ENCODE measurements at regions of chr1 and their contacts with region 1.

Region 1: GRCh38 chr1:171485375-171486047 is at the start of gene PRRC2C:
- DNase-seq: peak; percentile 93 to 96 (median 95)
- H3K4me3 ChIP-seq: peak within 1 kb of the TSS; percentile 45 to 99
- H3K4me3 Mint-ChIP-seq: peak within 1 kb of the TSS; percentile 90 to 99 (median 93)
- H3K27ac ChIP-seq: peak within 1 kb of the TSS; percentile 100
- H3K27ac Mint-ChIP-seq: peak within 1 kb of the TSS; percentile 95 to 100 (median 100)
- H3K4me1 ChIP-seq: peaks cover 48% of the 10 kb centered on the region
- H3K4me1 Mint-ChIP-seq: peaks cover 40 to 56% (median 48%) of the 10 kb centered on the region in 4 donors
- H3K27me3 ChIP-seq: no peaks in the 10 kb centered on the region
- H3K27me3 Mint-ChIP-seq: no peaks in the 10 kb centered on the region
- total RNA-seq, gene PRRC2C: 279 to 298 TPM

Region 2: GRCh38 chr1:171313835-171314320 is 171.6 kb before region 1 on chr1 and contains the start of gene FMO4:
- CTCF ChIA-PET with region 1: interaction called, 30 read pairs
- POLR2A ChIA-PET with region 1: interaction called, 22 read pairs
- intact Hi-C with region 1: loop called (anchors 1 kb)
- DNase-seq: peak; percentile 85 to 94 (median 92)
- H3K4me3 ChIP-seq: peak within 1 kb of the TSS in 1 of 2 donors; percentile 21
- H3K4me3 Mint-ChIP-seq: peak within 1 kb of the TSS; percentile 67 to 85 (median 80)
- H3K27ac ChIP-seq: peak within 1 kb of the TSS; percentile 54
- H3K27ac Mint-ChIP-seq: peak within 1 kb of the TSS; percentile 72 to 94 (median 92)
- H3K4me1 ChIP-seq: peaks cover 9% of the 10 kb centered on the region
- H3K4me1 Mint-ChIP-seq: peaks cover 11 to 26% (median 21%) of the 10 kb centered on the region in 4 donors
- H3K27me3 ChIP-seq: no peaks in the 10 kb centered on the region
- H3K27me3 Mint-ChIP-seq: no peaks in the 10 kb centered on the region
- total RNA-seq, gene FMO4: 2.7 to 3.6 TPM

Region 3: GRCh38 chr1:171434717-171435346 is 50.7 kb before region 1 on chr1:
- CTCF ChIA-PET with region 1: interaction called, 3 read pairs
- POLR2A ChIA-PET with region 1: interaction called, 3 read pairs
- intact Hi-C with region 1: loop called (anchors 2 kb)
- DNase-seq: peak in 4 of 5 donors; percentile 4 to 25 (median 18)
- H3K4me3 ChIP-seq: no peak overlapping the region
- H3K4me3 Mint-ChIP-seq: peak overlapping the region; percentile 40 to 84 (median 66)
- H3K27ac ChIP-seq: no peak overlapping the region
- H3K27ac Mint-ChIP-seq: peak overlapping the region; percentile 78 to 94 (median 85)
- H3K4me1 ChIP-seq: peaks cover 10% of the 10 kb centered on the region
- H3K4me1 Mint-ChIP-seq: peaks cover 9 to 22% (median 15%) of the 10 kb centered on the region in 4 donors
- H3K27me3 ChIP-seq: no peaks in the 10 kb centered on the region
- H3K27me3 Mint-ChIP-seq: peaks cover 2 to 11% of the 10 kb centered on the region in 2 donors

Region 4: GRCh38 chr1:171509191-171509590 is 23.7 kb after region 1 on chr1:
- CTCF ChIA-PET with region 1: interaction called, 8 read pairs
- POLR2A ChIA-PET with region 1: interaction called, 6 read pairs
- intact Hi-C with region 1: loop called (anchors 2 kb)
- DNase-seq: no peak
- H3K4me3 ChIP-seq: no peak overlapping the region
- H3K4me3 Mint-ChIP-seq: peak overlapping the region in 7 of 8 donors; percentile 6 to 79 (median 38)
- H3K27ac ChIP-seq: no peak overlapping the region
- H3K27ac Mint-ChIP-seq: peak overlapping the region in 6 of 7 donors; percentile 6 to 90 (median 69)
- H3K4me1 ChIP-seq: peaks cover 81% of the 10 kb centered on the region
- H3K4me1 Mint-ChIP-seq: peaks cover 68 to 91% (median 80%) of the 10 kb centered on the region in 4 donors
- H3K27me3 ChIP-seq: no peaks in the 10 kb centered on the region
- H3K27me3 Mint-ChIP-seq: no peaks in the 10 kb centered on the region

Region 5: GRCh38 chr1:171741872-171742576 is 256.5 kb after region 1 on chr1 and contains the start of gene VAMP4:
- CTCF ChIA-PET with region 1: interaction called, 5 read pairs
- POLR2A ChIA-PET with region 1: interaction called, 20 read pairs
- intact Hi-C with region 1: loop called (anchors 1 kb)
- DNase-seq: peak; percentile 85 to 90 (median 89)
- H3K4me3 ChIP-seq: peak within 1 kb of the TSS; percentile 84 to 92
- H3K4me3 Mint-ChIP-seq: peak within 1 kb of the TSS; percentile 97 to 100 (median 100)
- H3K27ac ChIP-seq: peak within 1 kb of the TSS; percentile 96
- H3K27ac Mint-ChIP-seq: peak within 1 kb of the TSS; percentile 98 to 100 (median 99)
- H3K4me1 ChIP-seq: peaks cover 44% of the 10 kb centered on the region
- H3K4me1 Mint-ChIP-seq: peaks cover 31 to 62% (median 48%) of the 10 kb centered on the region in 4 donors
- H3K27me3 ChIP-seq: no peaks in the 10 kb centered on the region
- H3K27me3 Mint-ChIP-seq: no peaks in the 10 kb centered on the region
- total RNA-seq, gene VAMP4: 29.4 to 32.0 TPM

Region 6: GRCh38 chr1:171841050-171841940 is 355.8 kb after region 1 on chr1 and contains the start of gene DNM3:
- CTCF ChIA-PET with region 1: no interaction called
- POLR2A ChIA-PET with region 1: interaction called, 3 read pairs
- intact Hi-C with region 1: loop called (anchors 5 kb)
- DNase-seq: peak; percentile 70 to 89 (median 85)
- H3K4me3 ChIP-seq: peak within 1 kb of the TSS; percentile 43 to 66
- H3K4me3 Mint-ChIP-seq: peak within 1 kb of the TSS; percentile 88 to 93 (median 89)
- H3K27ac ChIP-seq: peak within 1 kb of the TSS; percentile 41
- H3K27ac Mint-ChIP-seq: peak within 1 kb of the TSS; percentile 62 to 94 (median 81)
- H3K4me1 ChIP-seq: peaks cover 16% of the 10 kb centered on the region
- H3K4me1 Mint-ChIP-seq: peaks cover 12 to 20% (median 15%) of the 10 kb centered on the region in 4 donors
- H3K27me3 ChIP-seq: peaks cover 13% of the 10 kb centered on the region
- H3K27me3 Mint-ChIP-seq: peaks cover 7 to 10% of the 10 kb centered on the region in 2 donors
- total RNA-seq, gene DNM3: 2.0 to 2.7 TPM

Measured in CD4-positive, alpha-beta memory T cell (primary cell).